Activated CD4-positive, alpha-beta T cell treated with anti-CD3 and anti-CD28 coated beads for 36 hours (primary cell): ENCODE measurements at regions of chr14 and their contacts with region 1.

Region 1: DNA sequence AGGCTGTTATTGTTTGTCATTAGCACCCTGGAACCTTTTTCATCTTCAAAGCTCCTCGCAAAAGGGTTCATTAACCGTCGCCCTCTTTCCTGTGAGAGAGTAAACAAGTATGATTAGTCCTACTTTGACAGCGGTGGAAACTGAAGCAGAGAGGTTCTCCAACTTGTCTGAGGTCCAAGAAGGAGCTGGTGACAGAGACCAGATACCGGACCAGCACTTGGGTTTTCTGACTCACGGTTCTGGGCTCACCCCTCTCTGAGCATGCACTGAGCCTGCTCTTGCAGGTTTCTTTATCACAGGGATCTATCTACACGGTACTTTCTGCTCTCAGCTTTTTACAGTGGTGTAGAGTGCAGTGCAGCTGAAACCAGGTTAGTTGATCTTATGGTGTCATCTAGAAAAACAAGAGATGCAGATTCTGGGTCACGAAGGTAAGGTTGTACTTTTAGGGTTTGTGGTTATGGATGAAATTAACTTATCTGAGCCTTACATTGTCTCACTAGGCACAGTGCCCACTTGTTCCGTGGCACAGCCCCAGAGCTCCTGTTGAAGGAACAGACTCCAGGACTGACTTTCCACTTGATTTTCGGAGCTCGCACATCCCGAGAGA is 62.1 kb downstream of the PPP2R5C start:
- DNase-seq: peak; percentile 87
- ATAC-seq: peak; percentile 80
- H3K4me3 Mint-ChIP-seq: peak overlapping the region; percentile 68
- H3K27ac Mint-ChIP-seq: peak overlapping the region; percentile 97
- H3K4me1 Mint-ChIP-seq: peaks cover 87% of the 10 kb centered on the region
- H3K27me3 Mint-ChIP-seq: no peaks in the 10 kb centered on the region

Region 2: GRCh38 chr14:100375963-100376735 is 1447.5 kb before region 1 on chr14:
- CTCF ChIA-PET with region 1: no interaction called
- POLR2A ChIA-PET with region 1: interaction called, 5 read pairs
- intact Hi-C with region 1: loop called in 1 of 2 experiments (anchors 1 kb)
- DNase-seq: peak; percentile 96
- ATAC-seq: peak; percentile 70
- H3K4me3 Mint-ChIP-seq: peak within 1 kb of the TSS; percentile 99
- H3K27ac Mint-ChIP-seq: peak within 1 kb of the TSS; percentile 98
- H3K4me1 Mint-ChIP-seq: peaks cover 37% of the 10 kb centered on the region
- H3K27me3 Mint-ChIP-seq: no peaks in the 10 kb centered on the region

Region 3: DNA sequence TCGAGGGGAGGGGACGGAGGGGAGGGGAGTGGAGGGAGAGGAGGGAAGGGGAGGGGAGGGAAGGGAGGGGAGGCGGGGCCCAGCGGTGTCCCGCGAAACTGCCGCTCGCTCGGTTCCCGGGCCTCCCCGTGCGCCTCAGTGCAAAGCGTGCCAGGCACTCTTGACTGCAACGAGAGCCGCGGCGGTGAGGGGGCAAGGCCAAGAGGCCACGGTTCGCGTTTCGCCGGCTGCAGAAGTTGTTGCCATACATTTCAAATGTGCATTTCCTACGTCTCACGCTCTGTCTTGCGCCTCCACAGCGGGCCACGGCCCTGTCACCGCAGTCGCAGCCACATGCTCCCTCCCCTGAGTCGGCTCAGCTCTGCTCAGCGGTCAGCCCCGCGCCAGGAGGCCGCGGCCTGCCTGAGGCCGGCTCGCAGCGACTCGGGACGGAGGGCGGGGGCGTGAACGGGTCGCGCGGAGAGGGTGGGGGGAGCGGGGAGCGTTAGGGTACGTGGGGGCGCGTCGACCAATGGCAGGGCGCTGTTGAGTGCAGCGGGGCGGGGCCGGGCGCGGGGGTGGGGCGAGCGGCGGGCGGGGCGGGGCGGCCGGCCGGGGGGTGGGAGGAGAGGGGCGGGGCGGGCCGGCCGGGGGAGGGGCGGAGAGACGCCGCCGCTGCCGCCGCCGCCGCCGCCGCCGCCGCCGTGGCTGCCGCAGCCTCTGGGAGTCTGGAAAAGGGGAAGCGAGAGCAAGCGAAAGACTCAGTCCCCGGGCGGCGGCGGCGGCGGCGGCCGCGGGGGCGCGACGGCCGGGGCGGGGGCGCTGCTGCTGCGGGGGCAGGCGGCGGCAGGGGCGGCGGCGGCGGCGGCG is 62.4 kb before region 1 on chr14 and contains the start of gene PPP2R5C:
- CTCF ChIA-PET with region 1: interaction called, 5 read pairs
- POLR2A ChIA-PET with region 1: interaction called, 6 read pairs
- intact Hi-C with region 1: loop called (anchors 1 to 2 kb)
- DNase-seq: peak; percentile 94
- ATAC-seq: peak; percentile 65
- H3K4me3 Mint-ChIP-seq: peak within 1 kb of the TSS; percentile 85
- H3K27ac Mint-ChIP-seq: peak within 1 kb of the TSS; percentile 78
- H3K4me1 Mint-ChIP-seq: peaks cover 43% of the 10 kb centered on the region
- H3K27me3 Mint-ChIP-seq: no peaks in the 10 kb centered on the region
- total RNA-seq, gene PPP2R5C: 232 to 281 TPM

Region 4: DNA sequence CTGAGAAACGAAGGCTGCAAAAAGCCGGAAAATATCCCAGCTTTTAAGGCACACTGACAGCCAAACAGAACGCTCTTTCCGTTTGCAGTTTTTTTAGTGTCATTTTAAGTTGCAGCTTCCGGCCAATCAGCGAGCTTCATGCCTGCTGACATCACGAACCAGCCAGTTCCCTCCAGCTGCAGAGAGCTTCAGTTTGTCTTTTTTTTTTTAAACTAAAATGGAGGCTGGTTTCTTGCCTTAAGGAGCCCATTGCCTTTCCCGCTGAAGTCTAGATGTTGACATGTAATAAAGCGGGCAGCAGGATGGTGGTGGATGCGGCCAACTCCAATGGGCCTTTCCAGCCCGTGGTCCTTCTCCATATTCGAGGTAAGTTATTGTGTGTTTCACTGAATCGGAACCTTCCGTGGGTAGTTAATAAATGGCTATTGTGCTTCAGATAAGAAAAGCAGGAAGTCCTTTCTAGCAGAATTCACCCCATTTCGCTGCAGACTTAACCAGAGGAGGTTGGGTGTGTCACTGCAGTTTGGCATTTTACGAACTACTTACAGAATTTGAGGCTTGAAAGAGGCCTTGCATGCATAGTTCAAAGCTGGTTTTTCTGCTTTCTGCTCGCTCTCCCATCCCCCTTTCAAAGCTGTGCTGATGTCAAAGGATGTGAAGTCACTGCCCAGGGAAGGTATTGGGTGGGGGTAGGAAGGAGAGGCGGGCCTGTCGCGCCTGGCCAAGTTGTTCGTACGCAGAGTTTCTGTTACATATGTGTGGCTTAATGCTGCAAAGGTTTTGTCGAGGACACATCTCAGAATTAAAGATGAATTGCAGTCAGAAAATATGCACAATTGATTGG is 13.7 kb before region 1 on chr14:
- CTCF ChIA-PET with region 1: interaction called, 64 read pairs
- POLR2A ChIA-PET with region 1: interaction called, 182 read pairs
- intact Hi-C with region 1: loop called (anchors 1 kb)
- DNase-seq: peak; percentile 90
- ATAC-seq: peak; percentile 86
- H3K4me3 Mint-ChIP-seq: peak overlapping the region; percentile 97
- H3K27ac Mint-ChIP-seq: peak overlapping the region; percentile 99
- H3K4me1 Mint-ChIP-seq: peaks cover 49% of the 10 kb centered on the region
- H3K27me3 Mint-ChIP-seq: no peaks in the 10 kb centered on the region

Region 5: DNA sequence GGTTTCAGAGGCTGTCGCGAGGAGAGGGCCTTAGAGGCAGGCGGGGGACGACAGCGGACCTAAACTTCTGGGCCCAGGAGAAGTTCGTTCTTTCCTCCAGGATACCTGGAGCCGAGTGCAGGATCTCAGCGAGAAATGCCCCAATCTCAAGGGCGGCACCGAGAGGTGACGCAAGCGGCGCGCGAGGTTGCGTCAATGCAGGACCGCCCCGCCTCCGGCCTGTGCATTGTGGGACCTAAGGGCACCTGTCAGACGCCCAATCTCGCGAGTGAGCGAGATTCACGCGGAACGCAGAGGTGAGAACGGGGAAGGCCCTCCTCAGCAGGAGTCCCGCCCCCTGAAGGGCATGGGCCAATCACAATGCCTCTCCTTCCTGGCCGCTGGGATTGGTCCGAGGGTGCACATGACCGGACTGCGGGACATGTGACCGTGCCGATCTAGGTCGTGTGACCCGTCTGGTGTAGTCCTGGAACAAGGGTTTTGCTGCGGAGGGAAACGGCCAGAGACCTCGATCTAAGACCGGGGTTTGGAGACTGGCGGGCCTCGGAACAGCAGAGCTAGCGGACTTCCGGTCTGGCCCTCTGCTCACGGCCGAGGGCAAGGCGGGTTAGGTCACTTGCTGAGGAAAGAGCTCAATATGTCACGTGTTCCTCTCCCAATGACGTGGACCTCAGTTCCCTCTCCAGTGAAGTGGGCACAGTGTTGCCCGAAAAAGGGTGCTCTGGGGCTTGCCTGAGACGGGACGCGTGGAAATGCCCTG is 124.5 kb after region 1 on chr14:
- CTCF ChIA-PET with region 1: interaction called, 4 read pairs
- POLR2A ChIA-PET with region 1: interaction called, 5 read pairs
- intact Hi-C with region 1: loop called in 1 of 2 experiments (anchors 1 kb)
- DNase-seq: peak; percentile 100
- ATAC-seq: peak; percentile 98
- H3K4me3 Mint-ChIP-seq: peak overlapping the region; percentile 89
- H3K27ac Mint-ChIP-seq: peak overlapping the region; percentile 93
- H3K4me1 Mint-ChIP-seq: peaks cover 12% of the 10 kb centered on the region
- H3K27me3 Mint-ChIP-seq: peaks cover 17% of the 10 kb centered on the region

Region 6: GRCh38 chr14:102316743-102317563 is 493.3 kb after region 1 on chr14:
- CTCF ChIA-PET with region 1: no interaction called
- POLR2A ChIA-PET with region 1: no interaction called
- intact Hi-C with region 1: loop called in 1 of 2 experiments (anchors 5 kb)
- DNase-seq: peak; percentile 97
- ATAC-seq: peak; percentile 69
- H3K4me3 Mint-ChIP-seq: peak overlapping the region; percentile 92
- H3K27ac Mint-ChIP-seq: peak overlapping the region; percentile 98
- H3K4me1 Mint-ChIP-seq: peaks cover 61% of the 10 kb centered on the region
- H3K27me3 Mint-ChIP-seq: no peaks in the 10 kb centered on the region